Left colon (tissue), 2 donors: ENCODE measurements at regions of chr21 and their contacts with region 1.

Region 1: GRCh38 chr21:39388038-39388810 is 39.3 kb upstream of the HMGN1 start:
- DNase-seq: peak; percentile 88 to 98
- ATAC-seq: peak; percentile 72

Region 2: DNA sequence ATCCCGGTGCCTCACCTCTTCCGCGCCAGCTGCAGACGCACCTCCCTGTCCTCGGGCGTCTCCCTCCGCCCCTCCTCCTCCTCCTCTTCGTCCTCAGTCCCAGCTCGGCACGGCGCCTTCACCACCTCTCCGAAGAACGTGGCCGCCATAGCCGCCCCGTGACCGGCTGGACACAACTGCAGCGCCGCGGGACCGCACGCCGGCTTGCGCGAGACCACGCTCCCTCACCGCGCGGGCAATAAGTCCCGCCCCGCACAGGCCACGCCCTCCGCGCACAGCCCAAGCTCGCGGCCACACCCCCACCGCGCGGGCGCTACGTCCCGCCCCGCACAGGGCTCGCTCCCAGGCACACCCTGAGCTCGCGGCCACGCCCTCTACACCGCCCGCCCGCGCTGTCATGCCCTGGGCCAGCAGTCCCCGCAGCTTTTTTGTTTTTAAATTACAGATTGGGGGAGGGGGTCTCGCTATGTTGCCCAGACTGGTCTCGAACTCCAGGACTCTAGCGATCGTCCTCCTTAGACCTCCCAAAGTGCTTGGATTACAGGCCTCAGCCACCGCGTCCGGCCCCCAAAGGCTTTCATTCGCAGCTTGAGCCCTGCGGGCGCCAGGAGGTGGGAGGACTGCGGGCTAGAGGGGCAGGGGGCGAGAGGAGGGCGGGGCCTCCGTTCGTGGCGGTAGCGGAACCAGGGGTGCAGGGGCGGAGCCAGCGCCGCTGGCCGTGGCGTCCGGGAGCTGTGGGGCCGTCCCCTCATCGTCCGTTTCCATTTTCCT is 204.8 kb before region 1 on chr21 and contains the start of gene PSMG1:
- intact Hi-C with region 1: loop called in 1 of 2 experiments (anchors 10 kb)
- DNase-seq: peak; percentile 93 to 99
- ATAC-seq: peak; percentile 87
- total RNA-seq, gene PSMG1: 31.8 to 40.6 TPM

Region 3: DNA sequence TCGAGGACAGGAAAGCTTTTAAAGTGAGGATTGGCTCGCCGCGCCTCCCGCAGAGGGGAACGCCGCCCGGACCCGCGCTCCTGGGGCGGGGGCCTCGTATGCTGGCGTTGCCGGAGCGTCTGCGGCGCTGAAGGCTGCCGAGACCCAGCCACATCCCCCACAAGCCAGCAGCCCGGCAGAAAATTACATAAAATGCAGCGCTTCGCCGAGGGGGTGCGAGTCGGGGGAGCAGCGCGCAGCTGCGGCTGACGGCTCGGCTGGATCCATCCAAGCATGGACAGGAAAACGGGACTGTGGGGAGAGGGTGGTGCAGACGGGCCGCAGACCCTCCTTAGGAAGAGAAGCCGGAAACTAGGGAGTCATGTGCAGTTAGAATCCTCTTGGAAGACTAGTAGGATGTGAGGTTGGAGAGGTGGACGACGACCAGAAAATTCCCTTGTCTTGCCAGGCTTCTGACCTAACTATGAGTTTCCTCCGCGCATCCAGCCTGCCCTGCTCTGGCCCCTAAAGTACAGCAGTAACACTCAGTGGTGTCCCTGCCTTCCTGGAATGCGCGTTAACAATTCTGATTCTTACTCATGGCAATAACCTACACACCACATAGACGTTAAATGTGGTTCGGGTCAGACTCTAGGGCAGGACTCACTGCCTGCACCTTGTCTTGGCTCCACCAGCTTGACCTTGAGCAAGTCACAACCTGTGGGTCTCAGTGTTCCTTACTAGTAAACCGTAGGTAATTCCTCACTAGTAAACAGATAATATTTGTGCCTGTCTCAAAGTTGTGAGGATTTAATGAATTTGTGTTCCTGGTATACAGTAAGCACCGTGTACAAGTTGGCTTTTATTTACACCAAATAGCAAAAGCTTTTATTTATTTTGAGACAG is 73.8 kb before region 1 on chr21:
- intact Hi-C with region 1: loop called in 1 of 2 experiments (anchors 5 kb)
- DNase-seq: peak; percentile 53 to 60
- ATAC-seq: peak; percentile 23

Region 4: DNA sequence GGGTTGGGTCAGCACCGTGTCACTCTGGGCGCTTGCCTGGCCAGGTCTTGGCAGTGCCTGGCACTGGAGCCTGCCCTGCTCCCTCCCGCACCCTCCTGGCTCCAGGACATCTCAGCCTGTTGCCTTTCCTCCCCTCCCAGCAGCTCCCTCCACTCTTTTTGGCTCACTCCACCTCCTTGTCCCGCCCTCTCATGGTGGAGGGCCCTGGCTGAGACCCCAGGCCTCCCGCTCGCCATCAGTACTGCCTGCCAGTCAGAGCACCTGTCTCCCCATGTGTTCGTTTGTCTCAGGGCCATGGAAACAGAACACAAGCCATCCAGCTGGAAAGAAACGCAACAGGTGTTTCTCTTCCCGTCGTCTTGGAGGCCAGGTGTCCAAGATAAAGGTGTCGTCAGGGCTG is 285.5 kb after region 1 on chr21:
- intact Hi-C with region 1: no loop called
- DNase-seq: no peak
- ATAC-seq: no peak